H1 (cell line): ENCODE measurements at regions of chr11 and their contacts with region 1.

Region 1: DNA sequence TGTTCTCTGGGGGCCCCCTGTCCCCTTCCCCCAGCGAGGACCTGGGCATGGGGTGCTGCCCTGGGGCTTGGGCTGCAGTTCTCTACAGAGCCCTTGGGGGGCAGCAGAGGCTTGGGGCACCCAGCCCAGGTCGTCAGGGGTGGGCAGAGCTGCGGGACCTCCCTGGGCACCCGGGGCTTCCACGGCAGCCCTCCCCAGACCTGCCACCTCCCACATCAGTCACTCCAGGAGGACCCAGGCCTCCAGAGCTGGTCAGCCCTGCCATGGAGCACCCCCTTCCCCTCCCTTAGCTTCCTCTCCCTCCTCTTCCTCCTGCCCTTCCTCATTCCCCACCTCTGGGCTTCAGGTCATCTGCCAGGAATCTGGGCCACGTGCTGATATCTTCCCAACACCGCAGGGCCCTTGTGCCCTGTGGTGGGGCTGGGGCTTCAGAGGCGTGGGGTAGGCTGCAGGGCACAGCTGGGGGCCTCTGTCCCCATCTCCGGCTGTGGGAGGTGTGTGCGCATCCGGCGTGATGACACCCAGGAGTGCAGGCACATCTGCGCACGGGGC is 5.8 kb downstream of the TSPAN4 start:
- DNase-seq: peak in 1 of 2 experiments; percentile 85
- H3K4me3 ChIP-seq: peak overlapping the region in 1 of 4 experiments; percentile 60; a peak in 3 of 8 replicates
- H3K27ac ChIP-seq: no peak overlapping the region
- H3K4me1 ChIP-seq: peaks cover 0 to 47% (median 32%) of the 10 kb centered on the region in 4 experiments; a peak in 6 of 7 replicates
- H3K27me3 ChIP-seq: peaks cover 0 to 2% (median 0%) of the 10 kb centered on the region in 4 experiments; a peak in 4 of 7 replicates
- CTCF ChIP-seq: peak in 2 of 3 experiments; percentile 76 to 79; a peak in 3 of 4 replicates
- EP300 ChIP-seq: no peak
- POLR2A ChIP-seq: no peak
- RAD21 ChIP-seq: peak; percentile 65 to 77

Region 2: GRCh38 chr11:601573-602245 is 246.7 kb before region 1 on chr11:
- CTCF ChIA-PET with region 1: no interaction called
- POLR2A ChIA-PET with region 1: no interaction called
- DNase-seq: no peak
- H3K4me3 ChIP-seq: no peak overlapping the region
- H3K27ac ChIP-seq: no peak overlapping the region
- H3K4me1 ChIP-seq: no peaks in the 10 kb centered on the region
- H3K27me3 ChIP-seq: no peaks in the 10 kb centered on the region
- CTCF ChIP-seq: no peak
- EP300 ChIP-seq: no peak
- POLR2A ChIP-seq: no peak
- RAD21 ChIP-seq: no peak

Region 3: DNA sequence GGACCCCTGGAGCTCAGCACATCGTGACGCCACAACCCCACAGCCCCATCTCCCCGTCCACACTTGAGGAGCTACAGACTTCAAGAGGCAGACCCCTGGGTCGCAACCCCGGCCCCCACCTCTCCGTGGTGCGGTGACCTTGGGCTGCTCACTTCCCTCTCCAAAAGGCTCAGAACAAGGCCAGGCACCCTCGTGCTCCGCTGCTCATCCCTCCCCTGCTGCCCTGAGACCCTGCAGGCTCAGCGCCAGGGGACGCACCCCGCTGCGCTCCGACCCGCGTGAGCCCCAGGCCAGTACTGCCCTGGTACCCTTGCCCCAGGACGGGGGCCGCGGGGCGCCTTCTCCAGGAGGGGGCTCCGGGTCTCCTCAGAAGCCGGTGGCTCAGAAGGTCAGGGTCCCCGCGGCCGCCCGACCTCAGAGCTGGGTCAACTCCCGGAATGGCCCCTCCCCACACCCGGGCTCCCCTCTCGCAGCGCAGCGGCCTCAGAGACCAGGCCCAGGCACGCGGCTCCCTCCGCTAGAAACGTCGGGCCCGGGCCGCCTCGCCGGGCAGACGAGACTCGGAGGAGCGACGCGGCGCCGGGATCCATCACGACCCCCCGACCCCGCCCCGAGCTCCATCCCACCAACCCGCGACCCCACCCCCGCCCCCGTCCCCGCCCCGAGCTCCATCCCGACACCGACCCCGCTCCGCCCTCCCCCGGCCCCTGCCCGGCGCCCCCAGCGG is 71.7 kb before region 1 on chr11:
- CTCF ChIA-PET with region 1: no interaction called
- POLR2A ChIA-PET with region 1: no interaction called
- DNase-seq: no peak
- H3K4me3 ChIP-seq: peak overlapping the region; percentile 77 to 91 (median 85)
- H3K27ac ChIP-seq: peak overlapping the region; percentile 91; the same call in 1 of the 2 replicates
- H3K4me1 ChIP-seq: peaks cover under 1 to 16% (median 8%) of the 10 kb centered on the region in 4 experiments; a peak in 6 of 7 replicates
- H3K27me3 ChIP-seq: no peaks in the 10 kb centered on the region
- CTCF ChIP-seq: no peak
- EP300 ChIP-seq: no peak
- POLR2A ChIP-seq: peak in 1 of 2 experiments; percentile 2; a peak in 1 of 3 replicates
- RAD21 ChIP-seq: no peak

Region 4: DNA sequence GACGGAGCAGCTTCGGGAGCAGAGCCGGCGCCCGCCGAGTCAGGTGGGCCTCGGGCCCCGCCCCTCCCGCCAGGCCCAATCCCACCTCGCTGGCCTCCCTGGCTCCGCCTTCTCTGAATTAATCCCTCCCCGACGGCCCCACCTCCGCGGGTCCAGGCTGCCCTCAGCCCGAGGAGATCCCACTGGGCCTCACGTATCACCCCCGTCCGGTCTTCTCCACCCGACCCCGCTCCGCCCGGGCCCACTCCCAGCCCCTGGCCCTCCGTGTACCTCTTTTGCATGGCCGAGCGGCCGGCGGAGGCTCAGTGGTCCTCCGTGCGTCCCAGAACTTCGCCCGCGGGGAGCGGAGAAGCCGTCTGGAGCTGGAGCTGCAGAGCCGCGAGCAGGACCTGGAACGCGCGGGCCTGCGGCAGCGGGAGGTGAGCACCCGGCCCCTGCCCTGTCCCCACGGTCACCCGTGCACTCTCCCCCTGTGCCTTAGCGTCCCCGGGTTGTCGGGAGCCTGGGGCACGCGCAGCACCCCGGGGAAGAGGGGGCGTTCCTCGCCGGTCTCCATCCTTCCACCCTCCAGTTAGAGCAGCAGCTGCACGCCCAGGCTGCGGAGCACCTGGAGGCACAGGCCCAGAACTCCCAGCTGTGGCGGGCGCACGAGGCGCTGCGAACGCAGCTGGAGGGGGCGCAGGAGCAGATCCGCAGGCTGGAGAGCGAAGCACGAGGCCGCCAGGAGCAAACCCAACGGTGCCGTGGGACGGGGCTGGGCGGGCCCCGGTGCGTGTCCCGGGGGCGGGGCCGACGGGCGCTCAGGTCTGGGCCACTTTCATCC is 17.9 kb before region 1 on chr11:
- CTCF ChIA-PET with region 1: interaction called, 18 read pairs
- POLR2A ChIA-PET with region 1: interaction called, 1,917 read pairs
- DNase-seq: no peak
- H3K4me3 ChIP-seq: peak overlapping the region; percentile 45 to 74 (median 56)
- H3K27ac ChIP-seq: no peak overlapping the region
- H3K4me1 ChIP-seq: peaks cover 0 to 54% (median 47%) of the 10 kb centered on the region in 4 experiments; a peak in 6 of 7 replicates
- H3K27me3 ChIP-seq: peaks cover 6 to 41% (median 31%) of the 10 kb centered on the region in 4 experiments
- CTCF ChIP-seq: peak in 1 of 3 experiments; percentile 12; a peak in 1 of 4 replicates
- EP300 ChIP-seq: no peak
- POLR2A ChIP-seq: no peak
- RAD21 ChIP-seq: no peak

Region 5: DNA sequence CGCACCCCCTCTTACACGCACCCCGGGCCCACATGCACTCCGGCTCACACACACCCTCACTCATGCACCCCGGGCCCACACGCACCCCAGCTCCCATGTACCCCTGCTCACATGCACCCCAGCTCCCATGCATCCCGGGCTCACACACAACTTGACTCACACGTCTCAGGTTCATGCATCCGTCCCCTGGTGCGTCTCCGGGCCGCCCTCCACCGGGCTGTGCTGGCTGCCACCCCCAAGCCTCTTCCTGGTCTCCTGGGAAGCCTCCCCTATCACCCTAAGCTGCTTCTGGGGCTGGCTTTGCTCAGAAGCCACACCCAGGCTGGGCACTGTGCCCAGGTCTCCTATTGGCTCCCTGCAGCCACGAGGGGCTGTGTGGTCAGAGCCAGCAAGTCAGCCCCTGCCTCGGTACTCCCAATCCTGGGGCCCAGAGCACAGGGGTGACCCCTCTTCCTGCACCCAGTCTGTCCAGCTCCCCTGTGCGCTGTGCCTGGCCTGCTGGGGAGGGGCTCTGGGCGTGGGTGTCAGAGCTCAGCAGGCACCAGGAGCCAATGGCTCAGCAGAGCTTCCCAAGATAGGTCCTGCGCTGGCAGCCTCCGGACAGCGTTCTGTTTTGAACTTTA is 11.2 kb after region 1 on chr11:
- CTCF ChIA-PET with region 1: interaction called, 74 read pairs
- POLR2A ChIA-PET with region 1: interaction called, 234 read pairs
- DNase-seq: no peak
- H3K4me3 ChIP-seq: no peak overlapping the region
- H3K27ac ChIP-seq: no peak overlapping the region
- H3K4me1 ChIP-seq: peaks cover 0 to 35% (median 30%) of the 10 kb centered on the region in 4 experiments; a peak in 6 of 7 replicates
- H3K27me3 ChIP-seq: peaks cover 0 to 2% (median 0%) of the 10 kb centered on the region in 4 experiments; a peak in 2 of 7 replicates
- CTCF ChIP-seq: no peak
- EP300 ChIP-seq: no peak
- POLR2A ChIP-seq: no peak
- RAD21 ChIP-seq: no peak

Region 6: GRCh38 chr11:876519-876918 is 28.1 kb after region 1 on chr11:
- CTCF ChIA-PET with region 1: interaction called, 11 read pairs
- POLR2A ChIA-PET with region 1: interaction called, 8 read pairs
- DNase-seq: no peak
- H3K4me3 ChIP-seq: no peak overlapping the region
- H3K27ac ChIP-seq: no peak overlapping the region; the same call in 1 of the 2 replicates
- H3K4me1 ChIP-seq: no peaks in the 10 kb centered on the region; a peak in 2 of 7 replicates
- H3K27me3 ChIP-seq: no peaks in the 10 kb centered on the region
- CTCF ChIP-seq: no peak
- EP300 ChIP-seq: no peak
- POLR2A ChIP-seq: no peak
- RAD21 ChIP-seq: no peak

Region 7: DNA sequence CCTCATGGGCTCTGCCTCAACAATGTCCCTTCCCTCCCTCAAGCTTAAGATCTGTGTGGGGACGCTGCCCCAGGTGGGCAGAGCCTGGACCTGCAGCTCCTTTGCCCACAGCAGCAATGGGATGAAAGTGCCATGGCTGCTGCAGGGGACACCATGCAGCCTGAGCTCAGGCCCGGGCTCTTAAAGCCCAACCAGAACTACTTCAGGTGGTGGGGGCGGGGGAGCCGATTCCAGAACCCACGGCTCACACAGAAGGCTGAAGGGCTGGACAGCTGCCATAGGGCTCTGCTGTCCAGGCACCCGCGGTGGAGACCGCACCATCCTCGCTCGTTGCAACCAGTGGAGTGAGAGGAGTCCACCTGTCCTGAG is 49.7 kb after region 1 on chr11:
- CTCF ChIA-PET with region 1: interaction called, 15 read pairs
- POLR2A ChIA-PET with region 1: interaction called, 4 read pairs
- DNase-seq: no peak
- H3K4me3 ChIP-seq: no peak overlapping the region
- H3K27ac ChIP-seq: no peak overlapping the region; the same call in 1 of the 2 replicates
- H3K4me1 ChIP-seq: no peaks in the 10 kb centered on the region; a peak in 2 of 7 replicates
- H3K27me3 ChIP-seq: no peaks in the 10 kb centered on the region
- CTCF ChIP-seq: peak in 2 of 3 experiments; percentile 46 to 75; a peak in 2 of 4 replicates
- EP300 ChIP-seq: no peak
- POLR2A ChIP-seq: no peak
- RAD21 ChIP-seq: peak; percentile 52 to 70; a peak in 3 of 4 replicates

Region 8: DNA sequence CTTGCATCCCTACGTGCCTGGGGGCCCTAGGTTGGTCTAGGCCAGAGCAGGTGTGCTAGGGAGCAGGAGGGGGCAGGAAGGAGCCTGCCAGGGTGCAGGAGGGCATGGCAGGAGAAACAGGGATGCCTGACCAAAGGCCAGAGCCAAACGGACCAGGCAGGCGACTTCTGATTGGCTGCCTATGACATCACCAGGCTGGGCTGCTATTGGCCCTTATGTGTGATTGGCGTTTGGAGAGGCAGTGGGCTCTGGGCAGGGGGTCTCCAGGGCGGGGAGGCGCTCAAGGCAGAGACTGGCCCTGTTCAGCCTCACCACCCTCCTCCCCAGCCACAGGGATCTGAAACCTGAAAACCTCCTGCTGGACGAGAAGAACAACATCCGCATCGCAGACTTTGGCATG is 593.7 kb after region 1 on chr11:
- CTCF ChIA-PET with region 1: no interaction called
- POLR2A ChIA-PET with region 1: no interaction called
- DNase-seq: peak in 1 of 2 experiments; percentile 82
- H3K4me3 ChIP-seq: no peak overlapping the region
- H3K27ac ChIP-seq: 0 out of 2 replicates have a peak overlapping the region, but pooled peaks have one; percentile 5
- H3K4me1 ChIP-seq: peaks cover 0 to 6% (median 2%) of the 10 kb centered on the region in 4 experiments; a peak in 3 of 7 replicates
- H3K27me3 ChIP-seq: no peaks in the 10 kb centered on the region
- CTCF ChIP-seq: no peak
- EP300 ChIP-seq: no peak
- POLR2A ChIP-seq: no peak
- RAD21 ChIP-seq: no peak